ENCODE measurements at regions of chr4 and their contacts with region 1.

Region 1: DNA sequence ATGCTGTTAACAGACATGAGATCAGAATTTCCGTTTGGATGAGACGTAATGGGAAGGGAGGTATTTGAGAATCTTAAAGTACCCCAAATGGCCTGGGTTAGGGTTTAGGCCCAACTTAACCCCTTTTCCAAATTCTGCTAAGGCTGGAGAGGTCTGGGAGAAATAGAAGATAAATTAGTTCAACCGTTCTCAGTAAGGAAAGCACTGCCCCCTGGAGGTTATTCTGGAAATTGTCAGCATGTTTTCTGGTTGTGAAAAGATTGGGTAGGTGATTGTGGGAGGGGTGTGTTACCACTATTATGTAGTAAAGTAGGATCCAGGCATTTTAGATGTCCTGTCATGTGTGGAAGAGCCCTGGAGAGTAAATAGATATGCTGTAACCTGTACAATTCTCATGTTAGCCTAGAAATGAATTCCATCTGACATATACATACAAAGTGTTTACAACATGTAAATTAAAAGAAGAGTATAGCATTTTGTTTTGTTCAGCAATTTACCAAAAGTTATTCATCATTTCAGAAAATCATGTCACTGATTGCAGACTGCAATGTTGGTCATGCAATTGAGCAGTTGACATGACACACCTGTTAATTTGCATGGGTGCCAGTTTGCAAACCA is 26.8 kb upstream of the GRXCR1 start:
- DNase-seq: peak; percentile 59
- ATAC-seq: peak; percentile 36
- H3K4me3 Mint-ChIP-seq: no peak overlapping the region
- H3K27ac Mint-ChIP-seq: no peak overlapping the region
- H3K4me1 Mint-ChIP-seq: no peaks in the 10 kb centered on the region
- H3K27me3 Mint-ChIP-seq: peaks cover 18% of the 10 kb centered on the region

Region 2: GRCh38 chr4:42282081-42282901 is 583.4 kb before region 1 on chr4:
- CTCF ChIA-PET with region 1: interaction called, 3 read pairs
- POLR2A ChIA-PET with region 1: no interaction called
- intact Hi-C with region 1: loop called (anchors 1 to 10 kb)
- DNase-seq: peak; percentile 43
- ATAC-seq: peak; percentile 74
- H3K4me3 Mint-ChIP-seq: no peak overlapping the region
- H3K27ac Mint-ChIP-seq: no peak overlapping the region
- H3K4me1 Mint-ChIP-seq: peaks cover 5% of the 10 kb centered on the region
- H3K27me3 Mint-ChIP-seq: peaks cover 14% of the 10 kb centered on the region

Region 3: DNA sequence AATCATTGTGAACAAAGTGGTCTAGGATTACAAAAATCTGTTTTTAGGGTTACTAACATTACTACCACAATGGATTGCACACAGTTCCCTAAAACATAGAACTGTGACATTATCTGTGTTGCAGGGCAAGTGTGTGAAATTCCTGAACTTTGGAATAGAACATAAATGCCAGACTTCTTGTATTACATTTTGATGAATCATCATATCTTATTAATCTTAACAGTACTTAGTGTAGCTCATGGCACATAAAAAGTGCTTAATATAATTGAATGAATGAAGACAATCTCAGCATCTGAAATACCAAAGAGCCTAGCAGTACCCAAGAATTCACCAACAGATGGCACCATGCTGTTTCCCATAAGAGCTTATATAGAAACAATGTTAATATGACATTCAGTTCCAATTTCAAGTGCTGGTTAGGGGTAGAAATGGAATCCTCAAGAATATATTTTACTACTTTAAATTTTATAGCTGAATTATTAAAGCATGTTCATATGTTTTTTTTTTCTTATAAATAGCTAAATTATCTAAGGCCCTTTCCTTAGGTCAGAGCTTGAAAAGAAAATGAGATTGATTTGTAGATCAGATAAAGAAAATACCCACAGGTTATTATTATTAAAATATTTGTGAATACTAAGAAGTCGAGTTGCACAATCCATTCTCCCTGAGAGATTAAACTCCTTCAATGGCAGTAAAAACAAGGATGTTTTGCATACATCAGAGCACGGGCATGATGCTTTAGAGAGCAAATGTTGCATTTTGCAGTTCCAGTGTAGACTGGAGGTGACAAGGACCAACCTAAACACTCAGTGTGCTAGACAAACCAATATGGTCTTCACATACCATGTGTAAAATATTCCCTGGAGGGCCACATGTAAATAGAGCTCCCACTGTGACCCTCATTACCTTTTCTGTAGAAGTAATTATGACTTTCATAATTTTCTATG is 494.1 kb before region 1 on chr4:
- CTCF ChIA-PET with region 1: no interaction called
- POLR2A ChIA-PET with region 1: no interaction called
- intact Hi-C with region 1: loop called in 1 of 2 experiments (anchors 1 kb)
- DNase-seq: peak; percentile 10
- ATAC-seq: no peak
- H3K4me3 Mint-ChIP-seq: no peak overlapping the region
- H3K27ac Mint-ChIP-seq: no peak overlapping the region
- H3K4me1 Mint-ChIP-seq: no peaks in the 10 kb centered on the region
- H3K27me3 Mint-ChIP-seq: peaks cover 23% of the 10 kb centered on the region

Region 4: DNA sequence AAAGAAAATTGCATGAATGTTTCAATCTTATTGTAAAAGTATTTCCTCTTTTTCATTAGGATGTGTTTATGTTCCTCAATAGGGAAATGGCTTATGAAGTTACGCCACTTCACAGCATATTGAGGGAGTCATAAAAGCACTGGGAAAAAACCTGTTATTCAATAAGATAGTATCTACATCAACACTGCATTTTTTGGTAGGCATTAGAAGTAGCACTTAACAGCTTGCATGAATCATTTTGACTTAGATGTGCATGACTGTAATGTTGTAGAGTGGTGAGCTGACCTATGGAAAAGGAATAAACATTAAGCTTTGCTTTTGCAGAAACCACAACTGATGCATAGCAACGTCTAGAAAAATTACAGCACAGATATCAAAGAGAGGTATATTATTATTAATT is 84.4 kb before region 1 on chr4:
- CTCF ChIA-PET with region 1: no interaction called
- POLR2A ChIA-PET with region 1: no interaction called
- intact Hi-C with region 1: no loop called
- DNase-seq: no peak
- ATAC-seq: peak; percentile 49
- H3K4me3 Mint-ChIP-seq: no peak overlapping the region
- H3K27ac Mint-ChIP-seq: no peak overlapping the region
- H3K4me1 Mint-ChIP-seq: no peaks in the 10 kb centered on the region
- H3K27me3 Mint-ChIP-seq: no peaks in the 10 kb centered on the region

Measured in activated CD4-positive, alpha-beta T cell treated with anti-CD3 and anti-CD28 coated beads for 36 hours (primary cell).